ENCODE measurements at regions of chr17 and their contacts with region 1.

Region 1: GRCh38 chr17:54235571-54235970 is 412.8 kb downstream of the KIF2B start:
- DNase-seq: no peak
- H3K4me3 ChIP-seq: no peak overlapping the region
- H3K27ac ChIP-seq: no peak overlapping the region
- H3K4me1 ChIP-seq: no peaks in the 10 kb centered on the region
- H3K27me3 ChIP-seq: no peaks in the 10 kb centered on the region
- CTCF ChIP-seq: no peak
- EP300 ChIP-seq: no peak
- POLR2A ChIP-seq: no peak

Region 2: GRCh38 chr17:54180950-54181349 is 54.6 kb before region 1 on chr17:
- intact Hi-C with region 1: loop called in 1 of 4 experiments (anchors 5 kb)
- DNase-seq: no peak
- H3K4me3 ChIP-seq: no peak overlapping the region
- H3K27ac ChIP-seq: no peak overlapping the region
- H3K4me1 ChIP-seq: no peaks in the 10 kb centered on the region
- H3K27me3 ChIP-seq: no peaks in the 10 kb centered on the region
- CTCF ChIP-seq: no peak
- EP300 ChIP-seq: no peak
- POLR2A ChIP-seq: no peak

Measured in ovary (tissue), 10 donors.